MCF 10A (cell line): ENCODE measurements at regions of chr5 and their contacts with region 1.

Region 1: GRCh38 chr5:81851481-81852178 is 100.7 kb upstream of the SSBP2 start:
- DNase-seq: peak; percentile 91
- H3K4me3 Mint-ChIP-seq: peak overlapping the region; percentile 83
- H3K27ac Mint-ChIP-seq: peak overlapping the region; percentile 84
- H3K4me1 Mint-ChIP-seq: peaks cover 33% of the 10 kb centered on the region
- H3K27me3 Mint-ChIP-seq: no peaks in the 10 kb centered on the region
- CTCF ChIP-seq: no peak

Region 2: DNA sequence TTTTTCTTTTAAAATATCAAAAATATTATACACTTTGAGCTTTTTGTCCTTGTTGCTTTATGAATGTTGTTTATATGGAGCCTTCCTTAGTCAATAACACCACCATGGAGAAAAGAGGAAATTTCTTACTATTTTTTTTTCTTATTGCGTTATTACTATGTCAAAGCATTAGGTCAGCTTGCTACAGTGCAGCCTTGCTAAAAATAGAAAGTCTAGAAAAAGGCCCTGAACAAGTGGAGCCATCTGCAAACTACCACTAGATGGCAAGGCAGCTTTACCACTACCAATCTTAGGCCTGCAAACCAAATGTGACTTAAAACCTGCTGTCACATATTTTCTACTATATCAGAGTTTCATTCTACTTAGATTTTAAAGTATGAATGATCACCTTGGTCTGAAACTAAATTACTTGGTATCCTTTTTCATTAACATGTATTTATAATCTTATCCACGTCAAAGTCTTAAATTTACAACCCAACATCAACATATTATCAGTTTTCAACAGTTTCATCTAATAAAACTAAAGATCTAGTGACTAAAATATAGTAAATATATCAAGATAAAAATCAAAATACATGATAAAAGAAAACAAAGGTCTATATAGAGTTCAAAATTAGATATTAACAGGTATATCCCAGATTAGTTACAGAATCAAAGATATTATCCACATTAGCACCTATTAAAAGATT is 344.6 kb before region 1 on chr5:
- CTCF ChIA-PET with region 1: interaction called, 7 read pairs
- POLR2A ChIA-PET with region 1: interaction called, 6 read pairs
- intact Hi-C with region 1: loop called (anchors 2 kb)
- DNase-seq: peak; percentile 79
- H3K4me3 Mint-ChIP-seq: no peak overlapping the region
- H3K27ac Mint-ChIP-seq: no peak overlapping the region
- H3K4me1 Mint-ChIP-seq: no peaks in the 10 kb centered on the region
- H3K27me3 Mint-ChIP-seq: no peaks in the 10 kb centered on the region
- CTCF ChIP-seq: peak; percentile 73

Region 3: DNA sequence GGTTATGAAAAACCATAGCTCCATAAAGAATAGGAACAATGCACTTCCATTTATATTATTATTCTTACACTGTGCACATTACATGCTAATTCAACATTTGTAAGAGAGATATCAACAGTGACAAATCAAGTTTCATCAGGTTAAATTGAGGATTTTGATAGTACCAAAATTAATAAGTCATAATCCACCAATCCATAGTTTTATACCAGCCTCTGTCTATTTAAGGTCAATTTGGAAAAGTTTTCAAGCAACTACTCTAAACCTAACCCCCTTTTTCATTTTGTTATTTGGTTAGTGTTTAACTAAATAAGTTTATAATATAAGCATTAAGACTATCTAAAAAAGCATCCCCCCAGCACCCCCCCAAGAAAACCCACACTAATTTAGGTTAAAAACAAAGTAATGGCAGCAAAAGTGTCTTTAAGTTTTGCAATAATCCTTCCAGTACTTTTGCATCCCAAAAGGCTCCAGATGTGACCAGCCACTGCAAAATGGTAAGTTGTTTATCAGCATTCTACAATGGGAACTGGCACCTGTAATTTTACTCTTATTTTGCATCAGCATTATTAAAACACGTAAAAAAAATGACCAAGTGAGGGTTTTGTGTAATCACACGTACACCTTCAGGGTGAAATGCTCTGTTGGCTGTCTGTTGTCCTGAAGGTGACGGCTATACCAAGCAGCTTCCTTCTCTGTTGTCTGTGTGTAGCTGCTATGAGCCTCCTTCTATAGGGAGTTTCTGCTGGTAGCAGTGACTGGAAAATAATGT is 64.0 kb before region 1 on chr5:
- CTCF ChIA-PET with region 1: interaction called, 20 read pairs
- POLR2A ChIA-PET with region 1: interaction called, 125 read pairs
- intact Hi-C with region 1: loop called (anchors 1 kb)
- DNase-seq: peak; percentile 93
- H3K4me3 Mint-ChIP-seq: peak overlapping the region; percentile 45
- H3K27ac Mint-ChIP-seq: peak overlapping the region; percentile 92
- H3K4me1 Mint-ChIP-seq: peaks cover 25% of the 10 kb centered on the region
- H3K27me3 Mint-ChIP-seq: no peaks in the 10 kb centered on the region
- CTCF ChIP-seq: no peak

Region 4: DNA sequence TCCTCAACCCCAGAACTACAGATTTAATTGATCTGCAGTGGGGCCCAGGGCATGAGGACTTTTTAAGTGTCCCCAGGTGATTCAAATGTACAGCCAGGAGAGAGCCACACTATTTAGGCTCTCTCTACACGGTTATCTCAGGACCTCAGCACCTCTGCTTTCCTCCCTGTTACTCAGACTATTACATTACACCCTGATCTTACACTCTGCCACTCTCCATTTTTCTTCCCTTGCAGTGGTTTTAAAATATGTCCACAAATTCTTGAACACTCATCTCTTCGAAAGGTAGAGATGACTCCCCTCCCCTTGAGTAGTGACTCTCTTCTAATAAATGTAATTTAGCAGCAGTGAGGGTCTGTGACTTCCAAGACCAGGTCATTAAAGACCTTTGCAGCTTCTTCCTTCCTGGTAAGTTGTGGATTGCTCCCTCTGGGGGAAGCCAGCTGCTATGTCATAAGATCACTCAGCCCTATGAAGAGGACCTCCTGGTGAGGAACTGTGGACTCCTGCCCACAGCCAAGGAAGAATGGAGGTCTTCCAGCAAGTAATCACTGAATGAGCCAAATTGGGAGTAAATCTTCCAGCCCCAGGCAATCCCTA is 13.2 kb before region 1 on chr5:
- CTCF ChIA-PET with region 1: interaction called, 13 read pairs
- POLR2A ChIA-PET with region 1: interaction called, 13 read pairs
- intact Hi-C with region 1: no loop called
- DNase-seq: peak; percentile 48
- H3K4me3 Mint-ChIP-seq: no peak overlapping the region
- H3K27ac Mint-ChIP-seq: no peak overlapping the region
- H3K4me1 Mint-ChIP-seq: peaks cover 16% of the 10 kb centered on the region
- H3K27me3 Mint-ChIP-seq: no peaks in the 10 kb centered on the region
- CTCF ChIP-seq: peak; percentile 33

Region 5: GRCh38 chr5:82225525-82226172 is 374.0 kb after region 1 on chr5:
- CTCF ChIA-PET with region 1: interaction called, 7 read pairs
- POLR2A ChIA-PET with region 1: no interaction called
- intact Hi-C with region 1: loop called (anchors 1 kb)
- DNase-seq: peak; percentile 75
- H3K4me3 Mint-ChIP-seq: no peak overlapping the region
- H3K27ac Mint-ChIP-seq: no peak overlapping the region
- H3K4me1 Mint-ChIP-seq: peaks cover 12% of the 10 kb centered on the region
- H3K27me3 Mint-ChIP-seq: no peaks in the 10 kb centered on the region
- CTCF ChIP-seq: peak; percentile 85